ENCODE measurements at regions of chr7 and their contacts with region 1.

Region 1: DNA sequence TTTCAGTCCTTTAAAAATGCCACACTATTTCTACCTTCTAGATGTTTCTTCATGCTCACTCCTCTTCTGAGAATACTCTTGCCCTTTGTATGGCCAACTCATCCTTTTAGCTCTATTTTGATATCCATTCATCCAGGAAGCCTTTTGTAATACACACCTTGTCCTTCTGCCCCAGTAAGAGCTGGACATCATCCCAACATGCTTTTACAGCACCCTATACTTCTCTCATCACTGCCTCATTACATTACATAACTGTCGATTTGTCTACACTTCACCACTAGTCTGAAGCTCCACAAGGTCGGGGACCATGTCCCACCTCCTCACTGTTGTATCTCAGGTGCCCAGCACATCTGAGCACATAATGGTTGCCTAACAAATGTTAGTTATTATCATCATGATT is 29.2 kb downstream of the PRR15 start:
- DNase-seq: no peak
- H3K4me3 ChIP-seq: no peak overlapping the region
- H3K27ac ChIP-seq: no peak overlapping the region
- H3K4me1 ChIP-seq: no peaks in the 10 kb centered on the region
- H3K27me3 ChIP-seq: no peaks in the 10 kb centered on the region
- CTCF ChIP-seq: no peak
- POLR2A ChIP-seq: no peak

Region 2: DNA sequence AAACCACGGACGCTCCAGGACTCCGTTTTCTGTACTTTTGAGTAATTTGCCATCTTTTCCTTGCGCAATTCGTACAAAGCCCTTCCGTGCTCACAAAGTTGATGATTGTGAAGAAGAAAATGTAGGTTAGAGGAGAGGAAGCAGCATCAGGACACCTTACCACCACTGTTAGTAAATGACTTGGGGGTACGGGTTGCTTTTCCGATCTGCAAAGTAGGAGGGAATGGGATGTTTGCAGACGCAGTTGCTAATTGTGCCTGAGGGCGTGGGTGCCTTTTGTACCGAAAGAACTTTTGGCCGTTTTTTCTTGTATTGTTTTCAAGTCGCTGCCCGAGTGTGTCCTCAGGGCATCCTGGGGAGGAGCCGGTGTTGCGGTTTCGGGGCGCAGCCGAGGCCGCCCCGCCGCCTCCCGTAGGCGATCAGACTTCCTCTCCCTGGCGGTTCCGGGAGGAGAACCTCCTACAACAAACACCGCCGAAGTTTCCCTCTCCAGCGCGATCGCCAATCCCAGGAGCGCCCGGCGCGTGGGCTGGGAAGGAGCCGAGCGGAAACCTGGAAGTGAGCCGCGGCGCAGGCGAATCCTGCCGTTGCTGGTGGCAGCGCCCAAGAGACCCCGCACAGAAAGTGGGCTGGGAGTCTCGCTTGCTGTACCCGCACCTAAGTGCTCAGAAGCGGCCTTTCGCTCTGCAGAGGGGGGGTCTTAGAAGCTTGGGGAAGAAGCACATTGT is 28.2 kb before region 1 on chr7:
- intact Hi-C with region 1: loop called (anchors 1 kb)
- DNase-seq: no peak
- H3K4me3 ChIP-seq: peak overlapping the region; percentile 46 to 53
- H3K27ac ChIP-seq: peak overlapping the region; percentile 6
- H3K4me1 ChIP-seq: peaks cover 37% of the 10 kb centered on the region
- H3K27me3 ChIP-seq: no peaks in the 10 kb centered on the region
- CTCF ChIP-seq: no peak
- POLR2A ChIP-seq: no peak